ENCODE measurements at regions of chr22 and their contacts with region 1.

Region 1: GRCh38 chr22:39003165-39003638 is 10.9 kb upstream of the APOBEC3C start:
- DNase-seq: peak; percentile 84

Region 2: GRCh38 chr22:39123751-39124601 is 120.8 kb after region 1 on chr22:
- intact Hi-C with region 1: loop called (anchors 2 kb)
- DNase-seq: no peak

Measured in cardiac septum (tissue), 1 donor.